IMR-90 (cell line): ENCODE measurements at regions of chr14 and their contacts with region 1.

Region 1: GRCh38 chr14:35416108-35416750 is 11.7 kb upstream of the NFKBIA start:
- DNase-seq: no peak
- ATAC-seq: no peak
- H3K4me3 ChIP-seq: no peak overlapping the region
- H3K27ac ChIP-seq: no peak overlapping the region
- H3K4me1 ChIP-seq: peaks cover 20% of the 10 kb centered on the region
- H3K27me3 ChIP-seq: no peaks in the 10 kb centered on the region
- CTCF ChIP-seq: no peak
- POLR2A ChIP-seq: no peak
- RAD21 ChIP-seq: no peak

Region 2: GRCh38 chr14:34875031-34875922 is 541.0 kb before region 1 on chr14 and contains the start of gene BAZ1A:
- CTCF ChIA-PET with region 1: no interaction called
- POLR2A ChIA-PET with region 1: no interaction called
- dilution Hi-C with region 1: no loop called
- in situ Hi-C with region 1: no loop called
- intact Hi-C with region 1: loop called (anchors 10 kb)
- DNase-seq: peak; percentile 91
- ATAC-seq: peak; percentile 81
- H3K4me3 ChIP-seq: peak within 1 kb of the TSS; percentile 96
- H3K27ac ChIP-seq: peak within 1 kb of the TSS; percentile 97
- H3K4me1 ChIP-seq: peaks cover 2% of the 10 kb centered on the region; the same call in 1 of the 2 replicates
- H3K27me3 ChIP-seq: no peaks in the 10 kb centered on the region
- CTCF ChIP-seq: 0 out of 2 replicates have a peak, but pooled peaks have one; percentile 8
- POLR2A ChIP-seq: peak; percentile 91
- RAD21 ChIP-seq: peak; percentile 9; the same call in 1 of the 2 replicates
- total RNA-seq, gene BAZ1A: 23.8 and 43.6 TPM in 2 replicates

Region 3: DNA sequence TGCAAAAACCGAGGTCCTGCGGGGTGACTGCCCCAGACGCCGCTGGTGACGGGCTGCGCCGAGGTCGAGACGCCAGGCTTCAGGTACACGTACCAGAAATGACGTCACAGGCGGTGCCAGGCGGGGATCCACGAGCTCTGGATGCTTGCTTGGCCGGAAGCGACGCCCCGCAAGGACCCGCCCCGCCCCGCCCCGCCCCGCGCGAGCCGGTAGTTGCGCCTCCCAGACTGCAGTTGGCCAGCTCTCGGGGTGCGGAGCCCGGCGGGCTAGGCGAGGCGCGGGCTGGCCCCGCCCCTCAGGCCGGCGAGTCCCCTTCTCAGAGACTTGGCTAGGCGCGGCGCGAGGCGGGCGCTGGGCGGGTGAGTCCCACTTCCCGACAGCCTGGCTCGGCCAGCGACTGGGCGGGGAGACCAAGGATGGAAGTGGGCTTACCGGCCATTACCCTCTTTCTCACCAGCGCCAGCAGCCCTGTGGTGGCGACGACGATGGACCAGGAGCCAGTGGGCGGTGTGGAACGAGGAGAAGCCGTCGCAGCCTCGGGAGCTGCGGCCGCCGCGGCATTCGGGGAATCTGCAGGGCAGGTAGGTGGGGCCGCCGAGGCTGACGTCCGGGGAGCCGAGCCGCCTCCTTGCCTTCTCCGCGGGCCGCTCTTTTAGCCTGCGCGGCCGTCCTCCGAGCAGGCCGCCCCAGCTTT is 370.0 kb before region 1 on chr14 and contains the start of gene FAM177A1:
- CTCF ChIA-PET with region 1: no interaction called
- POLR2A ChIA-PET with region 1: no interaction called
- dilution Hi-C with region 1: no loop called
- in situ Hi-C with region 1: no loop called
- intact Hi-C with region 1: loop called (anchors 10 kb)
- DNase-seq: peak; percentile 94
- ATAC-seq: peak; percentile 97
- H3K4me3 ChIP-seq: peak within 1 kb of the TSS; percentile 79
- H3K27ac ChIP-seq: peak within 1 kb of the TSS; percentile 97
- H3K4me1 ChIP-seq: peaks cover 2% of the 10 kb centered on the region; the same call in 1 of the 2 replicates
- H3K27me3 ChIP-seq: no peaks in the 10 kb centered on the region
- CTCF ChIP-seq: no peak
- POLR2A ChIP-seq: peak; percentile 89
- RAD21 ChIP-seq: no peak
- total RNA-seq, gene FAM177A1: 18.5 and 35.8 TPM in 2 replicates

Region 4: DNA sequence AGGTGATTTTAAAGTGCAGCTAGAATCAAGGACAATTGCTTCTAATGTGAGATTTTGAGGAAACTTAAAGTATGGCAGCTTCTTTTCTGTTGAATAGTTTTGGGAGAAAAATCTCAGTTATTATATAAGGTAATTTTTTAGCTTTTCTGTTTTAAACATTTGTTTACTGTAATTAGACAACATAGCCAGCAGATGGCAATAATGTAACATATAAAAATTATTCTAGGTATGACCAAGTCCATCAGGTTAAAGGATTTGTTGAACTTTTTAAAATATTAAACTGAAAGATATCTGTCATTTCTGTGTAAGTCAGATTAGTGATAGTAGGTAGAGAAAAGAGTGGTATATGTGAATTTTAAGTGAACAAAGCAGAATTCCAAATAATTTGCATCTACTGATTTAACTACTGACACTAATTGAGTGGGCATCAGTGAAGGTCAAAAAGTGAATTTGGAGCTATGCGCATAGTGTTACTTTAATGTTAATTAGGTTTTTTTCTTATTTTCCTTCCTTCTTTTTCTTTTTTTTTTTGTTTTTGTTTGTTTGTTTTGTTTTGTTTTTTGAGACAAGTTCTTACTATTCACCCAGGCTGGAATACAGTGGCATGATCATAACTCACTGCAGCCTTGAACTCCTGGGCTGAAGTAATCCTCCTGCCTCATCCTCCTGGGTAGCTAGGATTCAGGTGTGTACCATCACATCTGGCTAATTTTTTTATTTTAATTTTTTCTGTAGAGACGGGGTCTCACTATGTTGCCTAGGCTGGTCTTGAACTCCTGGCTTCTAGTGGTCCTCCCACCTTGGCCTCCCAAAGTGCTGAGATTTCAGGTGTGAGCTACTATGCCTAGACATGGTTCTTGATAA is 275.3 kb before region 1 on chr14:
- CTCF ChIA-PET with region 1: interaction called, 9 read pairs
- POLR2A ChIA-PET with region 1: interaction called, 3 read pairs
- dilution Hi-C with region 1: no loop called
- in situ Hi-C with region 1: loop called (anchors 5 kb)
- intact Hi-C with region 1: loop called (anchors 1 kb)
- DNase-seq: peak; percentile 52
- ATAC-seq: peak; percentile 62; the same call in 1 of the 2 replicates
- H3K4me3 ChIP-seq: no peak overlapping the region
- H3K27ac ChIP-seq: no peak overlapping the region
- H3K4me1 ChIP-seq: no peaks in the 10 kb centered on the region
- H3K27me3 ChIP-seq: no peaks in the 10 kb centered on the region
- CTCF ChIP-seq: peak; percentile 62
- POLR2A ChIP-seq: no peak
- RAD21 ChIP-seq: peak; percentile 64

Region 5: GRCh38 chr14:35347323-35348043 is 68.7 kb before region 1 on chr14:
- CTCF ChIA-PET with region 1: no interaction called
- POLR2A ChIA-PET with region 1: no interaction called
- dilution Hi-C with region 1: no loop called
- in situ Hi-C with region 1: no loop called
- intact Hi-C with region 1: no loop called
- DNase-seq: no peak
- ATAC-seq: no peak
- H3K4me3 ChIP-seq: no peak overlapping the region
- H3K27ac ChIP-seq: no peak overlapping the region
- H3K4me1 ChIP-seq: peaks cover 8% of the 10 kb centered on the region
- H3K27me3 ChIP-seq: no peaks in the 10 kb centered on the region
- CTCF ChIP-seq: no peak
- POLR2A ChIP-seq: no peak
- RAD21 ChIP-seq: no peak

Region 6: DNA sequence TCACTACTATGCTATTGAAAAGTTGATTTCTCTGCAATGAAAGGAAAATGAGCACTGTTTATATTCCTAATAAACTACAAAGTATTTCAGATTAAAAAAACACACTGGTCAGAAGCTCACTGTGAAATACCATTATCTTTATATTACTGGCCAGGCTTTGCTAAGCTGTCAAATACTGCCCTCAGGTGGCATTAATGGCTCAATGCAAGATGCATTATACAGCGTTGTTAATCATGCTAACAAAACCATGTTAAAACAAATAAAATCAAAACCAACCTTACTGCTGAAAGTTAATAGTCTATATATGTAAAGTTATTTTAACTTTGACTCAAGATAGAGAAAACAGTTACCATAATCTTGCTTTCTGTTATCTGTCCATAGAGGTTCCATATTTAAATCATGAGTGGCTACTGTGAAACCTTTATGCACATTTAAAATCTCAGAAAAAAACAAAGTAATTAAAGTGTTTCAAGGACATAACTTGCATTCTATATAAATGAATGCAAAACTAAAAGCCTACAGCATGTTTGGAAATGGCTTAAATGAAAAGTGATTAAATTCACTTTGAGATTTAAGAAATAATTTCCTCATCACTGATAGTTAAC is 271.2 kb after region 1 on chr14:
- CTCF ChIA-PET with region 1: no interaction called
- POLR2A ChIA-PET with region 1: no interaction called
- dilution Hi-C with region 1: no loop called
- in situ Hi-C with region 1: loop called (anchors 10 kb)
- intact Hi-C with region 1: no loop called
- DNase-seq: peak; percentile 68
- ATAC-seq: peak; percentile 93
- H3K4me3 ChIP-seq: no peak overlapping the region
- H3K27ac ChIP-seq: no peak overlapping the region
- H3K4me1 ChIP-seq: peaks cover 4% of the 10 kb centered on the region
- H3K27me3 ChIP-seq: no peaks in the 10 kb centered on the region
- CTCF ChIP-seq: peak; percentile 92
- POLR2A ChIP-seq: no peak
- RAD21 ChIP-seq: peak; percentile 94